Caco-2 (cell line): ENCODE measurements at regions of chr14 and their contacts with region 1.

Region 1: DNA sequence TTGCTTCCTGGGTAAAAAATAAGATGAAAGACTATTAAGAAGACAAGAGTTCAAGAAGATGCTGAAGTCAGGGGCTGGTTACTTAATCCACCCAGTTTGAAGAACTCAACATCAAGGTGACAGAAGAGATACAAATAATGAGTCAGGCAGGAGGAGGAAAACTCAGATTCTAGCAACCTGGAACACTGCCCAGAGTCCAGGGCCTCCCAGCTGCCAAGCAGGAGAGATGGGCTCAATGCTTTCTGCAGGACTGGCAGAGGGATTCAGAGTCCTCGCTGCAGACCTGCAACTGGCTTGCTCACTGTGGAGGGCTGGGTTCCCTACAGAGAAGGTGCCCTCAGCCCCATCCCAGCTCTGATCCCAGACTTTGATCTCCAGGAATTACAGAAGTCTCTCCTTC is 28.6 kb upstream of the CEBPE start:
- DNase-seq: no peak
- H3K4me3 ChIP-seq: no peak overlapping the region
- H3K4me3 Mint-ChIP-seq: no peak overlapping the region
- H3K27ac Mint-ChIP-seq: no peak overlapping the region
- H3K4me1 ChIP-seq: peaks cover 29% of the 10 kb centered on the region
- H3K4me1 Mint-ChIP-seq: peaks cover 26% of the 10 kb centered on the region
- H3K27me3 ChIP-seq: no peaks in the 10 kb centered on the region
- H3K27me3 Mint-ChIP-seq: no peaks in the 10 kb centered on the region
- CTCF ChIP-seq: no peak

Region 2: DNA sequence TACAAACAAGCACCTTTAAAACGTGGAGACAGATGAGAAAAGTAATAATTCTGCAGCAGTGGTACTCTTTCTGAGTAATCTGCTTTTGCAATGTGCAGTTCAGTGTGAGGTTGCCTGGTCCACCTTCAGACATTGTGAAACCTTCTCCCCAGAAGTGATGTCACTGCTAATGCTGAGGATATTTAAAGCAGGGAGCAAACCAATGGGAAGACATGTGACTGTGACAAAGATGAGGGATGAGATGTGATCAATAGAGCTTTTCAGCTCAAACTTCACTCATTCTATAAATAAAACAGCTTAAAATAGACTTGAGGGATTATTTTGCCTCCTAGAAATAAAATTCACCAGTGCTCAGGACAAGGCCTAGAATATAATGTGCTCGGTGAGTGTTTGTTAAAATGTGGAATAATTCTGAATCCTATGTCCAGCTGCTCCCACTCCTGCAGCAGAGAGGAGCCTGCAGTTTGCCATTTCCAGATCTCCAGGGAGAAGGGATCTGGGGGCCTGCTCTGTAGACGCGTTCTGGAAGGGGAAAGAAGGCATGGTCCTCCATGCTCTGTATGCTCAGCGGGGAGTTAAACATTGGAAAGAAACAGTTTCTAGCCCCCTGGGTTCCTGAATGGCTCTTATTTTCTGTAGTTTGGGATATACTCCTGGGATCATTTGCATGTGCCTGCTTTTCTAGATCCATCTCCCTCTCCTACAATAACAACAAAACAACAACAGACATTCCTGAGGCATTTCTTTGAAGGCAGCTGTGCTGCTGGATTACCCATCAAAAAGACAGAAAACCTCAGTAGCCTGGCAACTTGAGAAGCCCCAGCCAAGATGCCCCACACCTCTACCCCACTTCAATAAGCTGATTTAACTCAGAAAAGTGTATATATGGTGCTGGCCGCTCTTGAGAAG is 26.9 kb after region 1 on chr14:
- CTCF ChIA-PET with region 1: no interaction called
- POLR2A ChIA-PET with region 1: interaction called, 3 read pairs
- intact Hi-C with region 1: loop called (anchors 1 kb)
- DNase-seq: peak in 1 of 2 experiments; percentile 44
- H3K4me3 ChIP-seq: no peak overlapping the region
- H3K4me3 Mint-ChIP-seq: peak overlapping the region; percentile 25
- H3K27ac Mint-ChIP-seq: peak overlapping the region; percentile 77
- H3K4me1 ChIP-seq: peaks cover 63% of the 10 kb centered on the region
- H3K4me1 Mint-ChIP-seq: peaks cover 42% of the 10 kb centered on the region
- H3K27me3 ChIP-seq: no peaks in the 10 kb centered on the region
- H3K27me3 Mint-ChIP-seq: no peaks in the 10 kb centered on the region
- CTCF ChIP-seq: no peak

Region 3: DNA sequence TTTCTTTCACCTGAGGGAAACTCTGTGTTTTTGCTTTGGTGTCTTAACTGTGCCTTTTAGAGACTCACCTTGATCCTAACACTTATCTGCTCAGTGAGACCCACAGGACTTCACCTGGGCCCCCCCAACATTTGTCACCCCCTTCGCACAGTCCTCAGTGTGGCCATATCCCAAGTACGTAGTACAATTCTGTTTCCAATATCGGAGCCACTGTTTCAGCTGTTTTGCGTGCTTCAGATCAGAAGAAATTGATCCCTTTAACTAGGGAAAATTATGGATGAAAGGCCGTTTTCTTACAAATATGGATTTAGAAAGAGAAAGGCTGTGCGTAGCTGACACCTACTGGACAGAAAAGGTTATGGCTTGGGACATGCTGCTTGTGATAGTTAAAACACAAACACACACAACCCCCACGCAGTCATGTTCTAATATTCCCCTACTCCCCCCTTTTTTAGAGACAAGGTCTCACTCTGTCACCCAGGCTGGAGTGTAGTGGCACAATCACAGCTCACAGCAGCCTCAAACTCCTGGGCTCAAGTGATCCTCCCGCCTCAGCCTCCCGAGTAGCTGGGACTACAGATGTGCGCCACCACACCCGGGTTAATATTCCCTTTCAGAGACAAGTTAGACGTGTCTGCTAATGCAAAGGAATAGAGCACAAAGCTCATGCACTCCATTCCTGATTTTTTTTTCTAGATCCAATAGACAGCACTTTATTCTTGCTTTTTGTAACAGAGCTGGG is 39.4 kb after region 1 on chr14:
- CTCF ChIA-PET with region 1: interaction called, 4 read pairs
- POLR2A ChIA-PET with region 1: no interaction called
- intact Hi-C with region 1: loop called (anchors 2 kb)
- DNase-seq: peak; percentile 53
- H3K4me3 ChIP-seq: no peak overlapping the region
- H3K4me3 Mint-ChIP-seq: no peak overlapping the region
- H3K27ac Mint-ChIP-seq: no peak overlapping the region
- H3K4me1 ChIP-seq: no peaks in the 10 kb centered on the region
- H3K4me1 Mint-ChIP-seq: peaks cover 5% of the 10 kb centered on the region
- H3K27me3 ChIP-seq: no peaks in the 10 kb centered on the region
- H3K27me3 Mint-ChIP-seq: no peaks in the 10 kb centered on the region
- CTCF ChIP-seq: peak; percentile 84 to 85